Endothelial cell of umbilical vein (primary cell): ENCODE measurements at regions of chr11 and their contacts with region 1.

Region 1: DNA sequence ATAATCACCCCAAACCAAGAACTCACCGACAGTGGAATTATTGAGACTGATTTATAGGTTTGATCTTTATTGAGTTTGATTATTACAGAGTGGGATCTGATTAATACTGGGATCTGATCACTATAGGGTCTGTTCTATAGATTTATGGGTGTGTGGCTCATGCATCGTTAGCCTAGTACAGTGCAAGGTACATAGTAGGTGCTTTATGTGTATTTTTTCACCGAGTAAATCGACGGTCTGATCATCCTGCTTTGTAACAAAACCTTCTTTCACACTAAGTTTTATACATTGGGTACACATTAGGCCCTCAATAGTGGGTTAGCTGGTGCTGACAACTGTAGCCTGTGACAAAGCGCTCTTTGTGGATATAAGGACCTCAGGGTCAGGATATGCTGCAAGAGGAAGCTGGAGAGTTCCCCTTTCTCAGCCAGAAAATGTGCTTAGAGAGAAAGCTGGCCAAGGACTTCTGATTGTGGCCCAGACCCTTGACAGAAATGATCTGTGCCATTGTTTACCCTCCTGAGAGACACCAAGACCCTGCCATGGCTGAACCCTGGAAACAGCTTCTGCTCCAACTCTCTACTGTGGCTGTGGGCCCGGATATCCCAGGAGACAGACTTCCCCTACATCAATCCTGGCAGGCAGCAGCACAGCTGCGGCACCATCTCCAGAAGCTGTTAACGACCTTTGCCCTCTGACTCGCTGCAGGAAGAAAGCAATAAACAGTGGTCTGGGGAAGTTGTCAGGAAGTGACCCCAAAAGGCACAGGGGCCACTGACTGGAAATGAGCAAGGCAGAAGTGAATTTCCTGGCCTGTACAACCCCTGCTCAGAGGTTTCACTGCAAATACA is 16.1 kb upstream of the TPP1 start:
- DNase-seq: peak; percentile 98
- H3K4me3 ChIP-seq: peak overlapping the region in 1 of 3 experiments; percentile 37
- H3K27ac ChIP-seq: peak overlapping the region; percentile 91
- H3K4me1 ChIP-seq: peaks cover 47% of the 10 kb centered on the region
- H3K27me3 ChIP-seq: no peaks in the 10 kb centered on the region
- CTCF ChIP-seq: no peak
- POLR2A ChIP-seq: peak; percentile 83

Region 2: GRCh38 chr11:6269994-6270393 is 365.3 kb before region 1 on chr11:
- CTCF ChIA-PET with region 1: no interaction called
- POLR2A ChIA-PET with region 1: no interaction called
- dilution Hi-C with region 1: no loop called
- intact Hi-C with region 1: no loop called
- DNase-seq: no peak
- H3K4me3 ChIP-seq: no peak overlapping the region
- H3K27ac ChIP-seq: no peak overlapping the region
- H3K4me1 ChIP-seq: no peaks in the 10 kb centered on the region
- H3K27me3 ChIP-seq: peaks cover 0 to 7% of the 10 kb centered on the region in 2 experiments
- CTCF ChIP-seq: no peak
- POLR2A ChIP-seq: no peak

Region 3: DNA sequence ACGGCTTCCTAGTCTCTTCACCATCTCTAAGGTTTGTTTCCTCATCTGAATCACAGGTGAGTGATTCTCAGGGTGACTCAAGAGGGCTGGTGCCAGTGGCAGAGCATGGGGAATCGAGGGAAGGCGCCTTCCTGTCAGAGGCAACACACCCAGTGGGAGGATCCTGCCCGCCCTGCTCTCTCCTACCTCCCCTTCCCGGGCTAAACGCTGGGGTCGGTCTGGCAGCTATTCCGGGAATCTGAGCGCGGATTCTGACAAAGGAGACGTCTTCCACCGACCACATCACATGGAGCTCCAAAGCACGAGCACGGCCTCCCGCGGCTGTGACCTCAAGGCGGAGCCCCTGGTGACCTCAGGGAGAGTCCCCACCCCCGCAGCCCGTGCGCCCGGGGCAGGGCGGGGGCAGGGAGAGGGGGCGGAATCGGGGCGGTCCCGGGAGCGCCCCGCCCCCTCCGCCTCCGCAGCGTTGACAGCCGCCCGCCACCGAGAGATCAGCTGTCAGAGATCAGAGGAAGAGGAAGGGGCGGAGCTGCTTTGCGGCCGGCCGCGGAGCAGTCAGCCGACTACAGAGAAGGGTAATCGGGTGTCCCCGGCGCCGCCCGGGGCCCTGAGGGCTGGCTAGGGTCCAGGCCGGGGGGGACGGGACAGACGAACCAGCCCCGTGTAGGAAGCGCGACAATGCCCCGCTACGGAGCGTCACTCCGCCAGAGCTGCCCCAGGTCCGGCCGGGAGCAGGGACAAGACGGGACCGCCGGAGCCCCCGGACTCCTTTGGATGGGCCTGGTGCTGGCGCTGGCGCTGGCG is 245.2 kb before region 1 on chr11 and contains the start of gene SMPD1:
- CTCF ChIA-PET with region 1: interaction called, 3 read pairs
- POLR2A ChIA-PET with region 1: no interaction called
- dilution Hi-C with region 1: no loop called
- intact Hi-C with region 1: loop called (anchors 1 kb)
- DNase-seq: peak; percentile 90
- H3K4me3 ChIP-seq: peak within 1 kb of the TSS; percentile 71 to 82 (median 72)
- H3K27ac ChIP-seq: peak within 1 kb of the TSS; percentile 73
- H3K4me1 ChIP-seq: peaks cover 33% of the 10 kb centered on the region
- H3K27me3 ChIP-seq: no peaks in the 10 kb centered on the region
- CTCF ChIP-seq: no peak
- POLR2A ChIP-seq: peak; percentile 86
- total RNA-seq, gene SMPD1: 51.9 and 58.9 TPM in 2 replicates

Region 4: GRCh38 chr11:6576471-6577373 is 58.6 kb before region 1 on chr11:
- CTCF ChIA-PET with region 1: no interaction called
- POLR2A ChIA-PET with region 1: no interaction called
- dilution Hi-C with region 1: no loop called
- intact Hi-C with region 1: no loop called
- DNase-seq: peak; percentile 84
- H3K4me3 ChIP-seq: peak overlapping the region in 1 of 3 experiments; percentile 0
- H3K27ac ChIP-seq: peak overlapping the region; percentile 69
- H3K4me1 ChIP-seq: peaks cover 32% of the 10 kb centered on the region
- H3K27me3 ChIP-seq: no peaks in the 10 kb centered on the region
- CTCF ChIP-seq: no peak
- POLR2A ChIP-seq: no peak

Region 5: GRCh38 chr11:6603287-6604080 is 31.8 kb before region 1 on chr11 and contains the starts of genes ILK and RRP8:
- CTCF ChIA-PET with region 1: interaction called, 6 read pairs
- POLR2A ChIA-PET with region 1: interaction called, 3 read pairs
- dilution Hi-C with region 1: no loop called
- intact Hi-C with region 1: loop called (anchors 1 kb)
- DNase-seq: peak; percentile 93
- H3K4me3 ChIP-seq: peak within 1 kb of the TSS; percentile 62 to 97 (median 90)
- H3K27ac ChIP-seq: peak within 1 kb of the TSS; percentile 83
- H3K4me1 ChIP-seq: peaks cover 44% of the 10 kb centered on the region
- H3K27me3 ChIP-seq: no peaks in the 10 kb centered on the region
- CTCF ChIP-seq: no peak
- POLR2A ChIP-seq: peak; percentile 87
- total RNA-seq, gene ILK: 221 and 233 TPM in 2 replicates
- total RNA-seq, gene RRP8: 19.4 and 23.3 TPM in 2 replicates

Region 6: GRCh38 chr11:6619004-6619745 is 16.1 kb before region 1 on chr11 and contains the start of gene TPP1:
- CTCF ChIA-PET with region 1: interaction called, 8 read pairs
- POLR2A ChIA-PET with region 1: interaction called, 4 read pairs
- dilution Hi-C with region 1: no loop called
- intact Hi-C with region 1: loop called (anchors 1 kb)
- DNase-seq: peak; percentile 97
- H3K4me3 ChIP-seq: peak within 1 kb of the TSS; percentile 26 to 88 (median 87)
- H3K27ac ChIP-seq: peak within 1 kb of the TSS; percentile 68
- H3K4me1 ChIP-seq: peaks cover 33% of the 10 kb centered on the region
- H3K27me3 ChIP-seq: no peaks in the 10 kb centered on the region
- CTCF ChIP-seq: no peak
- POLR2A ChIP-seq: peak; percentile 92
- total RNA-seq, gene TPP1: 101 and 124 TPM in 2 replicates

Region 7: GRCh38 chr11:6667733-6668374 is 32.5 kb after region 1 on chr11:
- CTCF ChIA-PET with region 1: interaction called, 14 read pairs
- POLR2A ChIA-PET with region 1: no interaction called
- dilution Hi-C with region 1: no loop called
- intact Hi-C with region 1: loop called (anchors 1 kb)
- DNase-seq: peak; percentile 34
- H3K4me3 ChIP-seq: no peak overlapping the region
- H3K27ac ChIP-seq: no peak overlapping the region
- H3K4me1 ChIP-seq: no peaks in the 10 kb centered on the region
- H3K27me3 ChIP-seq: no peaks in the 10 kb centered on the region
- CTCF ChIP-seq: peak; percentile 39 to 53
- POLR2A ChIP-seq: no peak

Region 8: GRCh38 chr11:6737872-6738466 is 102.7 kb after region 1 on chr11:
- CTCF ChIA-PET with region 1: no interaction called
- POLR2A ChIA-PET with region 1: no interaction called
- dilution Hi-C with region 1: no loop called
- intact Hi-C with region 1: no loop called
- DNase-seq: peak; percentile 64
- H3K4me3 ChIP-seq: no peak overlapping the region
- H3K27ac ChIP-seq: no peak overlapping the region
- H3K4me1 ChIP-seq: peaks cover 12% of the 10 kb centered on the region
- H3K27me3 ChIP-seq: peaks cover 0 to 3% of the 10 kb centered on the region in 2 experiments
- CTCF ChIP-seq: peak; percentile 53 to 66
- POLR2A ChIP-seq: no peak